ENCODE measurements at regions of chr21 and their contacts with region 1.

Region 1: GRCh38 chr21:37563641-37564340 is 197.2 kb downstream of the DYRK1A start:
- DNase-seq: peak; percentile 92
- H3K4me3 Mint-ChIP-seq: peak overlapping the region; percentile 89
- H3K27ac Mint-ChIP-seq: peak overlapping the region; percentile 100
- H3K4me1 Mint-ChIP-seq: peaks cover 39% of the 10 kb centered on the region
- H3K27me3 Mint-ChIP-seq: peaks cover 2% of the 10 kb centered on the region

Region 2: DNA sequence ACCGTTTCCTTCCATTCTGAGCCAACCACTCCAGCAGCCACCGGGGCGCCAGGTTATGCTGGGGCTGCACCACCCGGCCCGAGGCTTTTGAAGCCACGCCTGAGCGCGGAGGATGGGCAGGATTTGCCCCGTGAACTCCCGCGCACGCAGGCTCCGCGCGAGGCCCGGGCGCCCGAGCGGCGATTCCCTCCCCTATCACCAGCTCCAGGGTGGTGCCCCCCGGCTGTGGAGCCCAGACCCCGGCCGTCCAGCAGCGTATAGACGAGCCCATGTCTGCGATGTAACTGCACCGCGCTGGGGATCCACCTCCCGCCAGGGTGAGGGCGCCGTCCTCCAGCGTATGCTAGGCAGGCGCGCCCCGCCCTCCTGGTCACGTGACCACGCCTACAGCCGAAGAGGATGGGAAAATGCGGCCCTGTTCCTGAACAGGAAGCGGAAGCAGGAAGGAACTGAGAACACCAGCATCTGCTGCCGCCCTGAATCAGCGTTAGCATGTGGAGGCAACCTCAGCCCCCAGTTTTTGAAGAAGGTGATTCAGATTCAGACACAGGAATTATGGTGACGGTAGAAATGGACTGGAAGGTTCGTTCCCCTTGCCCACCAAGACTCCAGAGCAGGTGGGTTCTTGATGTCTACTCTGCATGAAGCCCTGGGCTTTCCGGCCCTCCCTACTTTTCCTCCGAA is 342.7 kb before region 1 on chr21:
- intact Hi-C with region 1: loop called (anchors 1 kb)
- DNase-seq: peak; percentile 89
- H3K4me3 Mint-ChIP-seq: peak overlapping the region; percentile 90
- H3K27ac Mint-ChIP-seq: peak overlapping the region; percentile 91
- H3K4me1 Mint-ChIP-seq: peaks cover 48% of the 10 kb centered on the region
- H3K27me3 Mint-ChIP-seq: peaks cover 1% of the 10 kb centered on the region

Region 3: DNA sequence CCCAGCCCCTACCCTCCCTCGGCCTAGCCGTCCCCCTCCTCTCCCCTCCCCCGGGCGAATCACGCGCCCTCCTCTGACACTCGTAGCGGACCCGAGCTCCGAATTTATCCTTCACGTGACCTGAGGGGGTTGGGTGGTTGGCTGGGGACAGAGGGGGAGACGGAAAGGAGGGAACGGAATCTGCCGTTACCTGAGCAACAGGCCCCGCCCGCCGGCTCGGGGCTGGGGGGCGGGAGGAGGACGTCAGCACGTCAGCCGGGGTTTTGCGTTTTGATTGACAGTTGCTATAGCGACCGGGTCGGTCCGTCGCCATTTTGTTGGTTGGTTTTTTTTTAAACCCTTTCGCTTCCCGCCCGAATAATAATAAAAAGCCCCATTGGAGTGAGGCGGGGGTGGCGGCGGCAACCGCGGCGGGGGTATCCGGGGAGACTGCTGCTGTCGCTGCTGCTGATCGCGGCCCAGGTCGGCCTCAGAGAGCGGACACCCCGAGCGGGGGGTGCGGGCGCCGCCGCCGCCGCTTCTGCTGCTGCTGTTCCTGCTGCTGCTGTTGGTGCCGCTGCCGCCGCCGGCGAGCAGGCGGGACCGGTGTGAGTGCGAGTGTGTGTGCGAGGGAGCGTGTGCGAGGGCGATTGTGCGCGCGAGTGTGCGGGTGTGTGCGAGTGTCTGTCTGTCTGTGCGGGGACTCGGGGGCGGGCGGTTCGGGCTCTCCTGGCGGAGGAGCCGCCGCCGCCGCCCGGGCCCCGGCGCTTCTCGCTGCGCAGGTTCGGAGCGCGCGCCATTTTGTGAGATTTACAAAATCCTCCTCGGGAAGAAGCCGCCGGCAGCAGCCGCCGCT is 197.1 kb before region 1 on chr21 and contains the start of gene DYRK1A:
- intact Hi-C with region 1: loop called (anchors 1 kb)
- DNase-seq: peak; percentile 97
- H3K4me3 Mint-ChIP-seq: peak within 1 kb of the TSS; percentile 98
- H3K27ac Mint-ChIP-seq: peak within 1 kb of the TSS; percentile 99
- H3K4me1 Mint-ChIP-seq: peaks cover 44% of the 10 kb centered on the region
- H3K27me3 Mint-ChIP-seq: peaks cover 2% of the 10 kb centered on the region
- total RNA-seq, gene DYRK1A: 66.5 and 68.1 TPM in 2 replicates

Region 4: GRCh38 chr21:37503848-37504467 is 59.8 kb before region 1 on chr21:
- intact Hi-C with region 1: loop called (anchors 5 kb)
- DNase-seq: no peak
- H3K4me3 Mint-ChIP-seq: no peak overlapping the region
- H3K27ac Mint-ChIP-seq: peak overlapping the region; percentile 85
- H3K4me1 Mint-ChIP-seq: peaks cover 21% of the 10 kb centered on the region
- H3K27me3 Mint-ChIP-seq: no peaks in the 10 kb centered on the region

Region 5: DNA sequence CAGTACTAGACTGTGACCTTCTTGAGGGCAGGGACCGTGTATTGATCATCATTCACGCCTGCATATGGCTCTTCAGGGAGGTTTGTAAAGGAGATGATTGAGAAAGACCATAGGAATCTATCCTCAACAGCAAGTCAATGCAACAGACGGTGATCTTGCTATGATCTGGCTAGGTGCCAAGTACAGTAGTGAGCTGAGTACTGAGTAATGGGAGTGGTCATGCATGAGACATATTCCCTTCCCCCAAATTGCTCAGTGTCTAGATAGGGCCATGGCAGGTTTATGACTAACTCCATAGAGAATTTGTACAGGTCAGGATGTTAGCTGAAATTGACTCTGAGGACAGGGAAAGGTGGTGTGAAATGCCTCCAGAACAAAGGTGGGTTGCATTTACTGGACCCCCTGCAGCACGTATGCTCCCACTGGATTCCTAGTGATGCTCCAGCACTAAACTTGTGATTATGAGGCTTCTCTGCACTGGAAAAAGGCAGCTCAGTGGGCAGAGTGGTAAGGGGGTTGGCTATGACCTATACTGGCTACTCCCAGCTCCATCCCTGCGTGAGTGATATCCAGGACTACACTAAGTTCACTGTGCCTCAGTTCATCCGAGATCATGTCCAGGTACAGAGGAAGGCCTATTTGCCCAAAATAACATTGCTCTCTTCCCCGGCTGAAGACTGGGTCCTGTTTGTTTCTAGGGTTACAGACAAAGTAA is 315.3 kb after region 1 on chr21:
- intact Hi-C with region 1: no loop called
- DNase-seq: no peak
- H3K4me3 Mint-ChIP-seq: no peak overlapping the region
- H3K27ac Mint-ChIP-seq: no peak overlapping the region
- H3K4me1 Mint-ChIP-seq: peaks cover 13% of the 10 kb centered on the region
- H3K27me3 Mint-ChIP-seq: no peaks in the 10 kb centered on the region

Region 6: DNA sequence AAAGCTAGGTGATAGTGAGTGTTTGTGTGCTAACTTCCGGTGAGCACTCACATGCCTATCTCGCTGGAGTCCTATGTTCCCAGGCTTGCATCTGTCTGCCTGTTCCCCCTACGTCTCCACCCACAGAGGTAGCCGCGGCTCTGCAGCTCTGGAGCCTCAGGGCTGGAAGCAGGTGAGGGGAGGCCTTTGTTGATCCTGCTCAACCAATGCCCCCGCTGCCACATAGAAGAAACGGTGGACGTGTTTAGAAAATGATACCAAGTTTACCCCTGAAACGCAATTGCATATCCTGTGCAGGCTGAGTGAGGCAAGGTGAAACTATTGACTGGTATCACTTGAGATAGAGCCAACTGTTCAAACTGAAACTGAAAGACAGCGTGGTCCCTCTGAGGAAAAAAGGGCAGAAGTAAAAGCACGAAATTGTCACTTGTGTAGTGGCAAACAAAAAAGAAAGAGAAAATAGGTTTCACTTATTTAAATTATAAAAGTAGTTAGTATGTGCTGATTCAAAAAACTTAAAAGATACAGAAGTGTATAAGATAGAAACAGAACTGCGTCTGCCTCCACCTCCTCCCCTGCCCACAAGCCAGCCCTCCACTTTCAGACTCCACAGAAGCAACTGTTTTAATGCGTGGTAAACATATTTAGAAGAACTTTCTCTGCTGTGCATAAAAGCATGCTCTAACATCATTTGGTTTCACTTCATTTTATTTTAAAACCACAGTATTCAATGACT is 1203.4 kb after region 1 on chr21:
- intact Hi-C with region 1: loop called (anchors 10 kb)
- DNase-seq: peak; percentile 72
- H3K4me3 Mint-ChIP-seq: peak overlapping the region; percentile 77
- H3K27ac Mint-ChIP-seq: peak overlapping the region; percentile 93
- H3K4me1 Mint-ChIP-seq: peaks cover 40% of the 10 kb centered on the region
- H3K27me3 Mint-ChIP-seq: peaks cover 9% of the 10 kb centered on the region

Measured in activated T-helper 1 cell treated with anti-CD3 and anti-CD28 coated beads, Interleukin-12 subunit alpha, Interleukin-12 subunit beta, Interleukin-2, Interleukin-4 antibody, amounts not matched to agents 30 ng/mL and 10 ng/mL and 1 ng/mL, durations not matched to agents 14 hours and 24 hours and 36 hours (primary cell).